ENCODE measurements at regions of chr20 and their contacts with region 1.

Region 1: DNA sequence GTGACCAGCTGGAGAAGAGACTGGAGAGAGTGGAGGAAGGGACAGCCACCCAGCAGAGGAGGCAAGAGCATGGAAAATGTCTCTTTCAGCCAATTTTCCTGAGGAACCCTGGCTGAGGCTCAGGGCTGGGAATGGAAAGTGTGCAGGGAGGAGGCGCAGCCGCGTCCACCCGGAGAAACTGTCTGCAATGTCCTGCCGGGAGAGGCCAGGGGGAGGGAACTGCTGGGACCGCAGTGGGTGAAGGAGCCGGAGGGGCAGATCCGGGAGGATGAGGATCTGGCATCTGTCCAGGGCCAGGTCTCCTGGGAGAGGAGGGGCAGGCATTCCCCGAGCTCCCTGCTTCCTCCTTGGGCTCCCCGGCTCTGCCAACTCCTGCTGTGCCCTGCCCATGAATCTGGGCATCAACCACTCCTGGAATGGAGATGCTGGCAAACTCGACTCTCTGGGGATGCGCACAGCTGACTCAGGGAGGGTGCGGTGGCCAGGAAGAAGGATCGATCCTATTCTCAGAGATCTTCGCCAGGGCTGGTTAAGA is 17.4 kb upstream of the HM13 start:
- DNase-seq: no peak
- H3K4me3 ChIP-seq: no peak overlapping the region
- H3K4me3 Mint-ChIP-seq: no peak overlapping the region
- H3K27ac ChIP-seq: no peak overlapping the region
- H3K27ac Mint-ChIP-seq: no peak overlapping the region
- H3K4me1 ChIP-seq: no peaks in the 10 kb centered on the region
- H3K4me1 Mint-ChIP-seq: no peaks in the 10 kb centered on the region
- H3K27me3 ChIP-seq: peaks cover 4% of the 10 kb centered on the region
- H3K27me3 Mint-ChIP-seq: peaks cover 11 to 12% of the 10 kb centered on the region in 2 donors

Region 2: GRCh38 chr20:31452575-31452974 is 44.3 kb before region 1 on chr20:
- CTCF ChIA-PET with region 1: interaction called, 87 read pairs
- POLR2A ChIA-PET with region 1: no interaction called
- intact Hi-C with region 1: no loop called
- DNase-seq: no peak
- H3K4me3 ChIP-seq: no peak overlapping the region
- H3K4me3 Mint-ChIP-seq: no peak overlapping the region
- H3K27ac ChIP-seq: no peak overlapping the region
- H3K27ac Mint-ChIP-seq: no peak overlapping the region
- H3K4me1 ChIP-seq: no peaks in the 10 kb centered on the region
- H3K4me1 Mint-ChIP-seq: no peaks in the 10 kb centered on the region
- H3K27me3 ChIP-seq: no peaks in the 10 kb centered on the region
- H3K27me3 Mint-ChIP-seq: peaks cover 6 to 9% of the 10 kb centered on the region in 2 donors

Region 3: DNA sequence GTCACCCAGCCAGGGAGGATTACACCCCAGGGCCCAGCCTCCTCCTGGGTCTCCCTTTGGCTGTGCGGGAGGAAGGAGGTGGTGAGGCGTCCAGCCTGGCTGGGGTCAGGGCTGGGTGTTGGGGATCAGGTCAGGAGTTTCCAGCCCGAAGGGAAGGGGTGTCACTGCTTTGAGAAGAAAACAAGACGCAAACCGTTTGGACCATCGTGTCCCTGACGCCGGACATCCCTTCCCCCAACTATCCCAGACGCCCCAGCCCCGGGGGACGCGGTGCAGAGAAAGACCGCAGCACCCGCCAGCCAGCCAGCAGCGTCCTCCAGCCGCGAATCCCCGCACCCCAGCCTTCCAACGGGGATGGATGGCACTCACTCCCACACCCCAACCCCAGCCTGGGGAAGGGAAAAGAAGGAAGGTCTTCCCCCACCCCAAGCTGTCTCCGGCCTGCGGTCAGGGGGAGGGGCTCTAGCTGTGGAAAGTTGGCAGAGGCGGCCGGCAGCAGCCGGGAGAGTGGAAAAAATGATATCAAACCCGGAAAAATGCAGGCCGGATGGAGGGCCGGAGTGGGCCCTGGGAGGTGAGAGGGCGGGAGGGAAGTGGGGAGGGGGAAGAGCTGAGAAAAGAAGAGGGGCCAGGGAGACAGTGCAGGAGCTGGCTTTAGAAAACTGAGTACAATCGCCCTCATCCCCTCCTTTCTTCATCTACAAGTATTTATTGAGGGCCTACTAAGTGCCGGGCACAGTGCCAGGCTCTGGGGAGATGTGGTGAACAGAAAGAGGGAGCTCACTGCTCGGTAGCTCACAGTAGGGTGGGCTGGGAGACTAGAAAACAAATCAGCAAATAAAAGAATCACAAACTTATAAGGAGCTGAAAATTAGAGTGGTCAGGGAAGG is 11.1 kb before region 1 on chr20:
- CTCF ChIA-PET with region 1: interaction called, 30 read pairs
- POLR2A ChIA-PET with region 1: no interaction called
- intact Hi-C with region 1: no loop called
- DNase-seq: no peak
- H3K4me3 ChIP-seq: no peak overlapping the region
- H3K4me3 Mint-ChIP-seq: no peak overlapping the region
- H3K27ac ChIP-seq: no peak overlapping the region
- H3K27ac Mint-ChIP-seq: no peak overlapping the region
- H3K4me1 ChIP-seq: no peaks in the 10 kb centered on the region
- H3K4me1 Mint-ChIP-seq: peaks cover 0 to 6% (median 4%) of the 10 kb centered on the region in 4 donors
- H3K27me3 ChIP-seq: no peaks in the 10 kb centered on the region
- H3K27me3 Mint-ChIP-seq: peaks cover 13 to 16% of the 10 kb centered on the region in 2 donors

Region 4: DNA sequence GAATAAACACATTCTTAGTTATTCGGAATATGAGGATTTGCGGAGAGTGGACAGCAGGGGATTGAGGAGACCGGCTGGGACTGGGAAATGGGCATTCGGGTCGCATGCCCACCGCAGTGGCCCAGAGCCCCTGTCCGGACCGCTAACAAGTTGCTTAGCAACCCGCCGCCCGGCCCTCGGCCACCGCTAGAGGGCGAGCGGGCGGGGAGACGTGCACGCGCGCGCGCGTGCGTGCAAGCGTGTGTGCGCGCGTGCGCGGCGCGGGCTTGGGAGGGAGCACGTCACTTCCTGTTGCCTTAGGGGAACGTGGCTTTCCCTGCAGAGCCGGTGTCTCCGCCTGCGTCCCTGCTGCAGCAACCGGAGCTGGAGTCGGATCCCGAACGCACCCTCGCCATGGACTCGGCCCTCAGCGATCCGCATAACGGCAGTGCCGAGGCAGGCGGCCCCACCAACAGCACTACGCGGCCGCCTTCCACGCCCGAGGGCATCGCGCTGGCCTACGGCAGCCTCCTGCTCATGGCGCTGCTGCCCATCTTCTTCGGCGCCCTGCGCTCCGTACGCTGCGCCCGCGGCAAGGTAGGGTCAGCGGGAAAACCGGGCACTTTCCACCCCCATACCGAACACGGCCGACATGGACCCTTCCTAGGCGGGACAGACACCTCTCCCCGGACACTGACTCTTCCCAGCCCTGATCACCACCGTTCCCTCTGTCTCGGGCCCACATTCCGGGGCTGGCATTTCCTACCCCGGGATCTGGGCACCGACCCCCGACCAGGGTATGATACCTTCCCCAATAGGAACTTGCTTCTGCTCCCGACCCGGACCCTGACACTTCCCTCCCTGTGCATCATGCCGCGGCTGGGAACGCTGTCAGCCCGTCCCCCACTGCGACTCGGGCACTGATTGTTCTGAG is 17.6 kb after region 1 on chr20 and contains the start of gene HM13:
- CTCF ChIA-PET with region 1: interaction called, 38 read pairs
- POLR2A ChIA-PET with region 1: no interaction called
- intact Hi-C with region 1: no loop called
- DNase-seq: peak; percentile 86 to 89 (median 88)
- H3K4me3 ChIP-seq: peak within 1 kb of the TSS; percentile 58 to 90
- H3K4me3 Mint-ChIP-seq: peak within 1 kb of the TSS in 3 of 8 donors; percentile 10 to 83 (median 78)
- H3K27ac ChIP-seq: peak within 1 kb of the TSS; percentile 91
- H3K27ac Mint-ChIP-seq: peak within 1 kb of the TSS in 5 of 7 donors; percentile 30 to 92 (median 85)
- H3K4me1 ChIP-seq: peaks cover 43% of the 10 kb centered on the region
- H3K4me1 Mint-ChIP-seq: peaks cover 8 to 13% (median 11%) of the 10 kb centered on the region in 4 donors
- H3K27me3 ChIP-seq: no peaks in the 10 kb centered on the region
- H3K27me3 Mint-ChIP-seq: no peaks in the 10 kb centered on the region
- total RNA-seq, gene HM13: 133 to 156 TPM